ENCODE measurements at regions of chr5 and their contacts with region 1.

Region 1: GRCh38 chr5:139262742-139263445 is 30.6 kb upstream of the MATR3 start:
- DNase-seq: peak; percentile 87 to 97 (median 93)
- H3K4me3 ChIP-seq: no peak overlapping the region
- H3K27ac ChIP-seq: peak overlapping the region in 2 of 5 donors; percentile 13 to 27
- H3K4me1 ChIP-seq: peaks cover 1 to 14% of the 10 kb centered on the region in 2 donors
- H3K27me3 ChIP-seq: no peaks in the 10 kb centered on the region
- CTCF ChIP-seq: peak; percentile 74 to 97 (median 89)
- POLR2A ChIP-seq: no peak

Region 2: GRCh38 chr5:138583984-138584637 is 678.8 kb before region 1 on chr5:
- intact Hi-C with region 1: loop called in 1 of 2 experiments (anchors 10 kb)
- DNase-seq: no peak
- H3K4me3 ChIP-seq: no peak overlapping the region
- H3K27ac ChIP-seq: no peak overlapping the region
- H3K4me1 ChIP-seq: peaks cover 3% of the 10 kb centered on the region in 2 donors
- H3K27me3 ChIP-seq: no peaks in the 10 kb centered on the region
- CTCF ChIP-seq: no peak
- POLR2A ChIP-seq: no peak

Measured in adrenal gland (tissue), 19 donors.